SK-N-SH (cell line): ENCODE measurements at regions of chr9 and their contacts with region 1.

Region 1: GRCh38 chr9:118156846-118157245 is 452.6 kb downstream of the TLR4 start:
- DNase-seq: no peak
- H3K4me3 ChIP-seq: no peak overlapping the region
- H3K27ac ChIP-seq: no peak overlapping the region
- H3K4me1 ChIP-seq: no peaks in the 10 kb centered on the region
- H3K27me3 ChIP-seq: no peaks in the 10 kb centered on the region
- CTCF ChIP-seq: no peak
- EP300 ChIP-seq: no peak
- RAD21 ChIP-seq: no peak

Region 2: GRCh38 chr9:118059484-118060278 is 97.2 kb before region 1 on chr9:
- CTCF ChIA-PET with region 1: no interaction called
- POLR2A ChIA-PET with region 1: no interaction called
- DNase-seq: no peak
- H3K4me3 ChIP-seq: no peak overlapping the region
- H3K27ac ChIP-seq: no peak overlapping the region
- H3K4me1 ChIP-seq: no peaks in the 10 kb centered on the region; a peak in 1 of 4 replicates
- H3K27me3 ChIP-seq: no peaks in the 10 kb centered on the region
- CTCF ChIP-seq: no peak
- EP300 ChIP-seq: no peak
- RAD21 ChIP-seq: no peak

Region 3: DNA sequence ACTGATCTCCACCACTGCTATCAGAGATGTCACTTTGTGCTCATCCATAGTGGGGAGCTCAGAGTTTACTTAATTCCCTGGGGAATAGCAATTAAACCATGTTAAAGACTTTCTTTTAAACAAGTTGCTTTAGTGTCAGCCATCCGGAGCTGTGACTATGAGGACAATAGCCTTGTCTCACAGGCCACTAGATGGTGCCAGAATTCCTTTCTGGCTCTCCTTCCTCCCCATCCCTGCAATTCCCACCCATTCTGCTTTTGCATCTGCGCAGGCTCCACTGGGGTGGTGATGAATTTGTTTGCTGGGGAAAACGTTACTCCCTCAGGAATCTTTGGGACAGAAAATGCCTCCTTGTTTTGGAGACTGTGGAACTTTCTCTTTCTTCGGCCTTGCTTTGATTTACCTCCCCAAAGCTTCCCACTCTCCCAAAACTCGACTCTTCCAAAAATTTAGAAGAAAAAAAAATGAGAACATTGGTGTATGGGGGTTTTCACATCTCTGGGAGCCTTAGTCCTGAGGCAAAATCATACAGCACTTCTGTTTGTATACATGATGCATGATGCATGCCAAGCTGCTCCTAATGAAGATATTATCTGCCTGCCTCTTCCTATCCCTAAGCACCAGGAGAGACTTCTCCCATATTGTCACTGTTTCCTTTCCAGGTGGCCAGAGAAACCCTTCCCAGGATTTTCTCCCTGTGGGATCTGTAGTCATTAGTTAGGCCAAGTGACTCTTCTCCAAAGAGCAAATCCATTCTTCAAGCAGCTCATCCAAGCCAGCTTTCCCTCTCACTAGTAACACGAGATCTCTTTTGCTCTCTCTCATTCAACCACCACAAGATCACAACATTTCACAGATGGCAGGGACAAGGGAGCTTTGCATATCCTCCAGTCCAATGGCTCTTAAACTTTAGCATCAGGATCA is 13.4 kb after region 1 on chr9:
- CTCF ChIA-PET with region 1: interaction called, 14 read pairs
- POLR2A ChIA-PET with region 1: no interaction called
- DNase-seq: peak; percentile 57
- H3K4me3 ChIP-seq: no peak overlapping the region
- H3K27ac ChIP-seq: no peak overlapping the region
- H3K4me1 ChIP-seq: no peaks in the 10 kb centered on the region; a peak in 1 of 4 replicates
- H3K27me3 ChIP-seq: no peaks in the 10 kb centered on the region
- CTCF ChIP-seq: peak; percentile 60
- EP300 ChIP-seq: no peak
- RAD21 ChIP-seq: peak; percentile 93

Region 4: GRCh38 chr9:118183571-118183970 is 26.7 kb after region 1 on chr9:
- CTCF ChIA-PET with region 1: no interaction called
- POLR2A ChIA-PET with region 1: no interaction called
- DNase-seq: no peak
- H3K4me3 ChIP-seq: no peak overlapping the region
- H3K27ac ChIP-seq: no peak overlapping the region
- H3K4me1 ChIP-seq: no peaks in the 10 kb centered on the region
- H3K27me3 ChIP-seq: no peaks in the 10 kb centered on the region
- CTCF ChIP-seq: no peak
- EP300 ChIP-seq: no peak
- RAD21 ChIP-seq: no peak